Activated CD8-positive, alpha-beta T cell treated with anti-CD3 and anti-CD28 coated beads for 36 hours (primary cell): ENCODE measurements at regions of chr18 and their contacts with region 1.

Region 1: GRCh38 chr18:58529714-58530354 is 99.1 kb downstream of the ALPK2 start:
- DNase-seq: peak; percentile 84
- ATAC-seq: peak; percentile 79
- H3K4me3 Mint-ChIP-seq: no peak overlapping the region
- H3K27ac Mint-ChIP-seq: no peak overlapping the region
- H3K4me1 Mint-ChIP-seq: peaks cover 16% of the 10 kb centered on the region
- H3K27me3 Mint-ChIP-seq: peaks cover 16% of the 10 kb centered on the region
- CTCF ChIP-seq: peak; percentile 95

Region 2: DNA sequence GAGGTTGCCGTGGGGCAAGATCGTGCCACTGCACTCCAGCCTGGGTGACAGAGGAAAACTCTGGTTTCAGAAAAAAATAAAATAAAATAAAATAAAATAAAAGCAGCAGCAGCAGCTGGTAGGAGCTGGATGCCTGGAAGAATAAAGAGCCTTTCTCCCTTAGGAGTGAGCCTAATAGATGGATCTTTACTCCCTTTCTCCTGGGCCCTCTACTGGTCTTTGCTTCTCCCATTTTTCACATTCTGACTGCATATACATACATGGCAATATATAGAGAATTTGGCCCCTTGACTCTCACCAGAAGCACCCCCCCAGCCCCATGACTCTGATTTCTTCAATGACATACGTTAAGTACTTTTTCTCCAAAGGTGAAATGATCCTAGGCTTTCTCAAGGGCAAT is 131.6 kb after region 1 on chr18:
- CTCF ChIA-PET with region 1: interaction called, 10 read pairs
- POLR2A ChIA-PET with region 1: interaction called, 3 read pairs
- intact Hi-C with region 1: no loop called
- DNase-seq: no peak
- ATAC-seq: no peak
- H3K4me3 Mint-ChIP-seq: no peak overlapping the region
- H3K27ac Mint-ChIP-seq: no peak overlapping the region
- H3K4me1 Mint-ChIP-seq: peaks cover 36% of the 10 kb centered on the region
- H3K27me3 Mint-ChIP-seq: no peaks in the 10 kb centered on the region
- CTCF ChIP-seq: no peak

Region 3: GRCh38 chr18:58754544-58755068 is 224.8 kb after region 1 on chr18:
- CTCF ChIA-PET with region 1: interaction called, 18 read pairs
- POLR2A ChIA-PET with region 1: no interaction called
- intact Hi-C with region 1: no loop called
- DNase-seq: peak; percentile 29
- ATAC-seq: peak; percentile 45
- H3K4me3 Mint-ChIP-seq: no peak overlapping the region
- H3K27ac Mint-ChIP-seq: peak overlapping the region; percentile 75
- H3K4me1 Mint-ChIP-seq: peaks cover 27% of the 10 kb centered on the region
- H3K27me3 Mint-ChIP-seq: no peaks in the 10 kb centered on the region
- CTCF ChIP-seq: no peak